Activated T-helper 2 cell treated with anti-CD3 and anti-CD28 coated beads, Interferon-gamma antibody, Interleukin-2, Interleukin-4, amounts not matched to agents 10 μg/mL and 5 μg/mL and 100 μg/mL, durations not matched to agents 14 hours and 24 hours and 36 hours (primary cell): ENCODE measurements at regions of chr12 and their contacts with region 1.

Region 1: GRCh38 chr12:80168936-80169335 is 69.6 kb downstream of the OTOGL start:
- DNase-seq: no peak
- H3K4me3 Mint-ChIP-seq: no peak overlapping the region
- H3K27ac Mint-ChIP-seq: peak overlapping the region; percentile 61
- H3K4me1 Mint-ChIP-seq: peaks cover 46% of the 10 kb centered on the region
- H3K27me3 Mint-ChIP-seq: peaks cover 6% of the 10 kb centered on the region

Region 2: DNA sequence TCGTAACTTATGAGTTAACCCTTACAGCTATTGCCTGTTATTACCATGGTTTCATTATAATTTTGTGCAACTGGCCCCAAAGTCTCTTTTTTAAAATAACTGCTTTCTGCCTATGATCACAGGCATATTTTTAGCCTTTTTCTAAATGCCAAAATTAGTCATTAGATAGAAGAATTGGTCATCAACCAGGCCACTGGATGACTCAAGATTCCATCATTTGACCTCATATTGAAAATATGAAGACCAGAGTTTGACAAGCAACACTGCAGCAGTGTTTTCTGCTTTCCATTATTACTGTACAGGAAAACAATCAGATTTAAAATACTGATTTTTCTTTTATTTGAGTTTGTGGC is 124.3 kb before region 1 on chr12:
- intact Hi-C with region 1: loop called (anchors 2 kb)
- DNase-seq: no peak
- H3K4me3 Mint-ChIP-seq: no peak overlapping the region
- H3K27ac Mint-ChIP-seq: no peak overlapping the region
- H3K4me1 Mint-ChIP-seq: peaks cover 3% of the 10 kb centered on the region
- H3K27me3 Mint-ChIP-seq: peaks cover 17% of the 10 kb centered on the region

Region 3: GRCh38 chr12:80142640-80143039 is 26.3 kb before region 1 on chr12:
- intact Hi-C with region 1: loop called (anchors 2 kb)
- DNase-seq: no peak
- H3K4me3 Mint-ChIP-seq: no peak overlapping the region
- H3K27ac Mint-ChIP-seq: no peak overlapping the region
- H3K4me1 Mint-ChIP-seq: peaks cover 6% of the 10 kb centered on the region
- H3K27me3 Mint-ChIP-seq: peaks cover 12% of the 10 kb centered on the region

Region 4: GRCh38 chr12:80157645-80158044 is 11.3 kb before region 1 on chr12:
- intact Hi-C with region 1: loop called (anchors 1 kb)
- DNase-seq: no peak
- H3K4me3 Mint-ChIP-seq: no peak overlapping the region
- H3K27ac Mint-ChIP-seq: no peak overlapping the region
- H3K4me1 Mint-ChIP-seq: peaks cover 20% of the 10 kb centered on the region
- H3K27me3 Mint-ChIP-seq: peaks cover 11% of the 10 kb centered on the region